H1 (cell line): ENCODE measurements at regions of chr2 and their contacts with region 1.

Region 1: GRCh38 chr2:105576440-105577252 is 168.1 kb upstream of the NCK2 start:
- DNase-seq: peak in 1 of 2 experiments; percentile 59
- H3K4me3 ChIP-seq: no peak overlapping the region
- H3K27ac ChIP-seq: no peak overlapping the region; the same call in 1 of the 2 replicates
- H3K4me1 ChIP-seq: peaks cover 0 to 6% (median 5%) of the 10 kb centered on the region in 4 experiments; a peak in 5 of 7 replicates
- H3K27me3 ChIP-seq: no peaks in the 10 kb centered on the region; a peak in 2 of 7 replicates
- CTCF ChIP-seq: peak; percentile 3 to 71 (median 40); a peak in 3 of 4 replicates
- EP300 ChIP-seq: no peak
- POLR2A ChIP-seq: no peak
- RAD21 ChIP-seq: peak; percentile 72 to 74

Region 2: DNA sequence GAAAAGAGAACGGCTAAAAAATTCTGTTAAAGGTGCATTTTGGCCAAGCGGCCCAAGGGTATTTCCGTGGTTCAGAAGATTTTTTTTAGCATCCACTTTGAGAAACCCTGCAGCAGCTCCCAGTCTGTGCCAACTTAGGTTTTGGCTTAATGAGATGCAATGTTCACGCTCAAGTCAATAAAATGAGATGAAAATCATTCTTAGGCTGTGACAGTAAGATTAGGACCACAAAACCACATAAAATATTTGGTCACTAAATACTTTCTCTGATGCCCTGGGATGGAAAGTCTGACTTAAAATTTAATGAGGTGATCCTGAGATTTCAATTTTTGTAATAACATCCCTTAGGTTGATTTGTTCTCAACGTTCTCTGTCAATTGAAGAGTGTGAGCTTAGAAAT is 103.6 kb before region 1 on chr2:
- CTCF ChIA-PET with region 1: no interaction called
- POLR2A ChIA-PET with region 1: no interaction called
- DNase-seq: no peak
- H3K4me3 ChIP-seq: no peak overlapping the region
- H3K27ac ChIP-seq: no peak overlapping the region
- H3K4me1 ChIP-seq: peaks cover 0 to 3% (median 0%) of the 10 kb centered on the region in 4 experiments; a peak in 3 of 7 replicates
- H3K27me3 ChIP-seq: no peaks in the 10 kb centered on the region
- CTCF ChIP-seq: no peak
- EP300 ChIP-seq: no peak
- POLR2A ChIP-seq: no peak
- RAD21 ChIP-seq: no peak

Region 3: GRCh38 chr2:105537466-105537865 is 39.2 kb before region 1 on chr2:
- CTCF ChIA-PET with region 1: no interaction called
- POLR2A ChIA-PET with region 1: no interaction called
- DNase-seq: peak in 1 of 2 experiments; percentile 19
- H3K4me3 ChIP-seq: no peak overlapping the region
- H3K27ac ChIP-seq: no peak overlapping the region
- H3K4me1 ChIP-seq: no peaks in the 10 kb centered on the region; a peak in 1 of 7 replicates
- H3K27me3 ChIP-seq: no peaks in the 10 kb centered on the region; a peak in 1 of 7 replicates
- CTCF ChIP-seq: no peak
- EP300 ChIP-seq: no peak
- POLR2A ChIP-seq: no peak
- RAD21 ChIP-seq: no peak

Region 4: DNA sequence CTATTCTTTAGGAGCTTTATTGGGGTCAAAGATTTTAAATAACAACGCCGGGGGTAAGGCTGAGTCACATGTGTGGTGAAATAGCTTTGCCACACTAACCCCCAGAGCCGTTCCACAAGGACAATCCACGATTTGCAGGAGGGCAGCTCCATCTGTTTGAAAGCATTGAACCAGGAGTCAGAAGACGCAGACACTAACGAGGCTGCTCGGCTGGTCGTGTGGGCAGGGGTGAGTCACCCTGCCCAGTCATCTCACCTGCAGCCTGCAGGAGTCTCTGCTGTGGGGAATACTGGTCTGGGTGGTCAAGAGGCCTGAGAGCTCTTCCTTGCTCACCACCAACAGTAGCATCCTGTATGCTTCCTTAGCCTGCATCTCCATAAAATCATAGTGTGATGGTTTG is 18.9 kb after region 1 on chr2:
- CTCF ChIA-PET with region 1: interaction called, 18 read pairs
- POLR2A ChIA-PET with region 1: no interaction called
- DNase-seq: no peak
- H3K4me3 ChIP-seq: no peak overlapping the region
- H3K27ac ChIP-seq: no peak overlapping the region
- H3K4me1 ChIP-seq: peaks cover 2 to 7% (median 5%) of the 10 kb centered on the region in 4 experiments; a peak in 4 of 7 replicates
- H3K27me3 ChIP-seq: no peaks in the 10 kb centered on the region
- CTCF ChIP-seq: peak in 1 of 3 experiments; percentile 21; a peak in 1 of 4 replicates
- EP300 ChIP-seq: no peak
- POLR2A ChIP-seq: no peak
- RAD21 ChIP-seq: no peak; a peak in 1 of 4 replicates